ENCODE measurements at regions of chr5 and their contacts with region 1.

Region 1: DNA sequence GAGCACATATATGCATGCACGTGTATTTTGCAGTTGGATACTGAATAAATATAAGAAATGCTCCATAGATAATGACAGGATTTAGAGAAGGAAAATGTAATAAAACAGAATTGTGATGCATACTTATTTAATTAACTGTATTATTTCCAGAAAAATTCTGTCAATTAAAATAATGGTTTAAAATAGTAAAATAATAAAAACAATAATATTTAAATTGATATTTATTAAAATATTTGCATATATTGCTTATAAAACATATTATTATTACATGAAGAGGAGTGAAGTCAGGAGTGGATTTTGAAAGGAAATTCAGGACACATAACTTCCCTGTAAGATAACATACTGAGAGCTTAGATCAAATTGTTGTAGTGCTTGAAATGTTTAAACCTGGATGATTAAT is 21.4 kb upstream of the EDIL3 start:
- DNase-seq: no peak
- H3K4me3 ChIP-seq: no peak overlapping the region
- H3K27ac ChIP-seq: no peak overlapping the region
- H3K4me1 ChIP-seq: no peaks in the 10 kb centered on the region
- H3K27me3 ChIP-seq: no peaks in the 10 kb centered on the region
- CTCF ChIP-seq: no peak
- POLR2A ChIP-seq: no peak

Region 2: DNA sequence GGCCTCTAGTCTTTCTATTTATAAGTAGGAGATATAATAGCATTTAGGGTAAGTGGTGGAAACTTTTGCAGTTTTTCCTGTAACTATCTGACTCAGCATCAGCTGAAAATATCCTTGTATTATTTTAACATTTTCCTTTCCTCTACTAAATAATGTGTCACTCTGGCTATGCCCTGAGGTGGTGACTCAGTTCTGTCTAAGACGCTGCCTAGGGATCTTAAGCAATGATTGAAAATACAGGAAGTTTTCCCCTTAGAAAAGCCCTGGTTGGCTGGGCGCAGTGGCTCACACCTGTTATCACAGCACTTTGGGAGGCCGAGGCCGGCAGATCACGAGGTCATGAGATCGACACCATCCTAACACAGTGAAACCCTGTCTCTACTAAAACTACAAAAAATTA is 12.1 kb before region 1 on chr5:
- CTCF ChIA-PET with region 1: interaction called, 11 read pairs
- POLR2A ChIA-PET with region 1: no interaction called
- dilution Hi-C with region 1: no loop called
- intact Hi-C with region 1: no loop called
- DNase-seq: peak; percentile 90
- H3K4me3 ChIP-seq: no peak overlapping the region
- H3K27ac ChIP-seq: peak overlapping the region; percentile 68
- H3K4me1 ChIP-seq: peaks cover 18% of the 10 kb centered on the region
- H3K27me3 ChIP-seq: no peaks in the 10 kb centered on the region
- CTCF ChIP-seq: no peak
- POLR2A ChIP-seq: no peak